Lower leg skin (tissue), 4 donors: ENCODE measurements at regions of chr15 and their contacts with region 1.

Region 1: GRCh38 chr15:56428821-56429458 is 36.0 kb downstream of the MNS1 start:
- DNase-seq: no peak
- H3K4me3 ChIP-seq: no peak overlapping the region
- CTCF ChIP-seq: no peak
- POLR2A ChIP-seq: no peak

Region 2: GRCh38 chr15:56252386-56252785 is 176.6 kb before region 1 on chr15:
- intact Hi-C with region 1: loop called (anchors 10 kb)
- DNase-seq: no peak
- H3K4me3 ChIP-seq: no peak overlapping the region
- CTCF ChIP-seq: no peak
- POLR2A ChIP-seq: no peak